ENCODE measurements at regions of chr1 and their contacts with region 1.

Region 1: DNA sequence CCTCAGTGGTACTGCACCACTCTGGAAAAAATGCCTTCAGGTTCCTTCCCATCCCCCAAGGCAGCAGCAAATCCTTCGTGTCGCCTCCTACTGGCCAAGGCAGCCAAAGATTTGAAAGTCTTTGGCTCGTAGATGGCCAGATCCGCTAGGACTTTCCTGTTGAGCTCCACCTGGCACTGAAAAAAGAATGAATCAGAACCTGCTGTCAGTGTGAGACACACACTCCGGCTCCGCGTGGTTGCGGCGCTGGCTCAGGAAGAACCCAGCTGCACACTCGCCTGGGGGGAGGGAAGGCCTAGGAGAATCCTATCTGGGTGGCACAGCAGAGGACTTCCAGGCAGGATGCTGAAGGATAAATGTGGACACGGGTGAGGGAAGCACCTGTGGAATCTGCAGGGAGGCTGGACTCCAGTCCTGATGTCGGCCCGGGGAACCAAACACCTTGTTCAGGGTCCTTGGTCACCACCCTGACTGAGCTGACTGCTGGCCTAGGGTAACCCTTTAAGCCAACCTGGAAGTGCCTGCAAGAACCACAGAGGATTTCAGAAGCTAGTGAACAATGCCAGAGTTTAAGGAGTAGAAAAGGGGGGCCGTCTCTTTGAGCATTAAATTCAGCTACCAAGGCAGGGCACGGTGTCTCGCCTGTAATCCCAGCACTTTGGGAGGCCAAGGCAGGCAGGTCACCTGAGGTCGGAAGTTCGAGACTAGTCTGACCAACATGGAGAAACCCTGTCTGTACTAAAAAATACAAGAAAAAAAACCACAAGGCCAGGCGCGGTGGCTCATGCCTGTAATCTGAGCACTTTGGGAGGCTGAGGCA is 3.2 kb upstream of the CCNL2 start:
- DNase-seq: peak; percentile 36
- H3K4me3 ChIP-seq: no peak overlapping the region
- H3K27ac ChIP-seq: no peak overlapping the region
- H3K4me1 ChIP-seq: peaks cover 25 to 42% (median 34%) of the 10 kb centered on the region in 4 donors
- H3K27me3 ChIP-seq: no peaks in the 10 kb centered on the region
- CTCF ChIP-seq: peak; percentile 22 to 54 (median 46)
- EP300 ChIP-seq: no peak
- POLR2A ChIP-seq: no peak

Region 2: DNA sequence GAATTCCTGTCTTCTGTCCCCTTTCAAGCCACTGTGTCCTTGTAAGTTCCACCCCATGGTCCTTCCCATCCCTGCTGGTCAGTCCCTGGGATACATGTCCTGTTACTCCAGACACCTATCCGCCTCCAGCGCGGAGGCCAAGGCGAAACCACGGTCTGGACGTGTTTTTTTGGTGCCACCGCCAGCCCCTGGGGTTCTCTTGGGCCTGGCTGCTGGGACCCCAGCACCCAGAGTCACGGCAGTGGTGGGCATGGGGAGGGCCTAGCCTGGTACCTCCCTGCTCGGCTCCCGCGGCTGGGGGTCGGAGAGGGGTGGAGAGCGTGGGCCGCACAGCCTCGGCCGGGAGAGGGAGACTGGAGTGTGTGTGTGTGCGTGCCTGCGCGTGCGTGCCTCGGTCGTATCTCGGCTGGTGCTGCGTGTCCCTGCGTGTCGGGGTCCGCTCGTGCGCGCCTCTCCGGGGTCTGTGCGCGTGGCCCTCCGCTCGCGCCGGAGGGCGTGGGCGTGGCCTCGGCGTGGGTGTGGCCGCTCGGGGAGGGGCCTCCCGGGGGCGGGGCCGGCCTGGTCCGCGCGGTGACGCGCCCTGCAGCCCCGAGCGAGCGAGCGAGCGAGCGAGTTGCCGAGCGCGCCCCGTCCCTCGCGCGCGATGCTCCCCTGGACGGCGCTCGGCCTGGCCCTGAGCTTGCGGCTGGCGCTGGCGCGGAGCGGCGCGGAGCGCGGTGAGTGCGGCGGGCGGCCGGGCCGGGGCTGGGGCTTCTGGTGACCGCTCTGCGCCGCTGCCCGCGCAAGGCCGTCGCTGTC is 33.0 kb after region 1 on chr1 and contains the start of gene VWA1:
- in situ Hi-C with region 1: no loop called
- intact Hi-C with region 1: loop called (anchors 5 kb)
- DNase-seq: peak; percentile 84
- H3K4me3 ChIP-seq: peak within 1 kb of the TSS; percentile 25 to 56 (median 51)
- H3K27ac ChIP-seq: peak within 1 kb of the TSS; percentile 88 to 96 (median 94)
- H3K4me1 ChIP-seq: peaks cover 62 to 81% (median 80%) of the 10 kb centered on the region in 4 donors
- H3K27me3 ChIP-seq: no peaks in the 10 kb centered on the region
- CTCF ChIP-seq: no peak
- EP300 ChIP-seq: no peak
- POLR2A ChIP-seq: no peak
- total RNA-seq, gene VWA1: 29.4 to 82.0 (median 51.6) TPM

Region 3: GRCh38 chr1:2882968-2883696 is 1480.8 kb after region 1 on chr1:
- in situ Hi-C with region 1: no loop called
- intact Hi-C with region 1: no loop called
- DNase-seq: no peak
- H3K4me3 ChIP-seq: no peak overlapping the region
- H3K27ac ChIP-seq: no peak overlapping the region
- H3K4me1 ChIP-seq: no peaks in the 10 kb centered on the region
- H3K27me3 ChIP-seq: peaks cover 17% of the 10 kb centered on the region
- CTCF ChIP-seq: no peak
- EP300 ChIP-seq: no peak
- POLR2A ChIP-seq: no peak